PC-3 (cell line): ENCODE measurements at regions of chr2 and their contacts with region 1.

Region 1: GRCh38 chr2:186780701-186781348 is 68.1 kb downstream of the ZSWIM2 start:
- DNase-seq: peak; percentile 90
- ATAC-seq: peak; percentile 100
- H3K4me3 ChIP-seq: no peak overlapping the region
- H3K27ac ChIP-seq: no peak overlapping the region
- H3K4me1 ChIP-seq: 0 out of 2 replicates have a peak, but pooled peaks cover 3% of the 10 kb centered on the region
- H3K27me3 ChIP-seq: no peaks in the 10 kb centered on the region
- CTCF ChIP-seq: peak; percentile 88

Region 2: GRCh38 chr2:186503848-186504606 is 276.8 kb before region 1 on chr2:
- CTCF ChIA-PET with region 1: no interaction called
- POLR2A ChIA-PET with region 1: no interaction called
- intact Hi-C with region 1: loop called (anchors 1 kb)
- DNase-seq: peak; percentile 67
- ATAC-seq: peak; percentile 49
- H3K4me3 ChIP-seq: no peak overlapping the region
- H3K27ac ChIP-seq: no peak overlapping the region
- H3K4me1 ChIP-seq: no peaks in the 10 kb centered on the region
- H3K27me3 ChIP-seq: no peaks in the 10 kb centered on the region
- CTCF ChIP-seq: peak; percentile 77

Region 3: DNA sequence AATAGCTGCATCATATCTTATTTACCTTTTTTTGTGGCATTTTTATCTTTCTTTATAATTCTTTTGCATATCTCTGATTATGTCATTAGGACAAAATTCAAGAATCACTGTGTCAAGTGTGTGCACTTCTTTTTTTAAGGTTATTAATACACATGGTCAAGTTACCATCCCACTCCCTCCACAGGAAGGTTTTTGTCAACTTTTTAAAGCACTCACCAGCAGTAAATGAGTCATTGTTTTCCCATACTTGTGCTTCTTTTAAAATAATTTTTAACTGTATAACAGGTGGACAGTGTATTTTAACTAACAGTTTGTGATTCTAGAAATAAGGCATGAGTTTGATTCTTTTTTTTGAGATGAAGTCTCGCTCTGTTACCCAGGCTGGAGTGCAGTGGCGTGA is 132.7 kb before region 1 on chr2:
- CTCF ChIA-PET with region 1: no interaction called
- POLR2A ChIA-PET with region 1: no interaction called
- intact Hi-C with region 1: loop called (anchors 2 kb)
- DNase-seq: peak; percentile 32
- ATAC-seq: peak; percentile 95
- H3K4me3 ChIP-seq: no peak overlapping the region
- H3K27ac ChIP-seq: no peak overlapping the region
- H3K4me1 ChIP-seq: no peaks in the 10 kb centered on the region
- H3K27me3 ChIP-seq: no peaks in the 10 kb centered on the region
- CTCF ChIP-seq: no peak

Region 4: DNA sequence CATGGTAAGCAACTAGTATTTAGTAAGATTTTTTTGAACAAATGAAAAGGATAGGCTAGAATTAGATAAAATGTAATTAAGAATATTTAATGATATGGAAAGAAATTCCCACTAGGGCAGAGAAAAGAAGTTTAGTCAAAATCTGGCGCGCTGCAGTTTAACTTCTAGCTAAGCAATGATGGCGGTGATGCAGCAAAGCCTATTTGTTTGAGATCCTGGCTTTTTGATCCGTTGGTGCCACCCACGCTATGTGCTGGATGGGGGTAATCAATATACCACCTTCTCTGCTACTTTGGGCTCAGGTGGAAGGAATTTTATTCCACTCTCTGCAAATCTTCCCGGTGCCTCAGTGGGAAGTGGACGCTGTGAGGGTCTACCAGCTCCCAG is 87.4 kb before region 1 on chr2:
- CTCF ChIA-PET with region 1: no interaction called
- POLR2A ChIA-PET with region 1: no interaction called
- intact Hi-C with region 1: loop called (anchors 5 kb)
- DNase-seq: no peak
- ATAC-seq: no peak
- H3K4me3 ChIP-seq: peak overlapping the region; percentile 78
- H3K27ac ChIP-seq: no peak overlapping the region
- H3K4me1 ChIP-seq: peaks cover 21% of the 10 kb centered on the region
- H3K27me3 ChIP-seq: no peaks in the 10 kb centered on the region
- CTCF ChIP-seq: no peak

Region 5: GRCh38 chr2:186894478-186894877 is 113.7 kb after region 1 on chr2:
- CTCF ChIA-PET with region 1: no interaction called
- POLR2A ChIA-PET with region 1: no interaction called
- intact Hi-C with region 1: no loop called
- DNase-seq: no peak
- ATAC-seq: no peak
- H3K4me3 ChIP-seq: no peak overlapping the region
- H3K27ac ChIP-seq: no peak overlapping the region
- H3K4me1 ChIP-seq: peaks cover 20% of the 10 kb centered on the region
- H3K27me3 ChIP-seq: no peaks in the 10 kb centered on the region
- CTCF ChIP-seq: no peak